G401 (cell line): ENCODE measurements at regions of chr1 and their contacts with region 1.

Region 1: GRCh38 chr1:153749408-153750005 is 21.7 kb downstream of the INTS3 start:
- DNase-seq: peak; percentile 71

Region 2: DNA sequence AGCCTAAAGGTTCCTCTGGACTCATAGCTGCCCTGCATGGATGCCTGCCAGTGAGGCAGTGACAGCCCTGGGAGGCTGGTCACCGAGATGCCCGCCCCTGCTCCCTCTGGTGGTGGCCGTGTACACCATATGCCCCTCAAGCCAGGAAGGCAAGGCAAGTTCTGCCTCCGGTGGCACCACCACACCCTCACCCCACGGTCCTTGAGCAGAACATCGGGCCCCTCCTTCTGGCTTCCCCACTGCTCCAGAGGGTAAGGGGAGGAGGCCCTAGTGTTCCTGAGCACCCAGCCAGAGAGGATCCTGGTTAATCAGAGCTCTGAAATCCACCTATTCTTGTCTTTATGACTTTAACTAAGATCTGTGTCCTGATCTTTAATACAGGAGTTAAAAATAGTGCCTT is 131.8 kb before region 1 on chr1:
- in situ Hi-C with region 1: no loop called
- DNase-seq: no peak

Region 3: DNA sequence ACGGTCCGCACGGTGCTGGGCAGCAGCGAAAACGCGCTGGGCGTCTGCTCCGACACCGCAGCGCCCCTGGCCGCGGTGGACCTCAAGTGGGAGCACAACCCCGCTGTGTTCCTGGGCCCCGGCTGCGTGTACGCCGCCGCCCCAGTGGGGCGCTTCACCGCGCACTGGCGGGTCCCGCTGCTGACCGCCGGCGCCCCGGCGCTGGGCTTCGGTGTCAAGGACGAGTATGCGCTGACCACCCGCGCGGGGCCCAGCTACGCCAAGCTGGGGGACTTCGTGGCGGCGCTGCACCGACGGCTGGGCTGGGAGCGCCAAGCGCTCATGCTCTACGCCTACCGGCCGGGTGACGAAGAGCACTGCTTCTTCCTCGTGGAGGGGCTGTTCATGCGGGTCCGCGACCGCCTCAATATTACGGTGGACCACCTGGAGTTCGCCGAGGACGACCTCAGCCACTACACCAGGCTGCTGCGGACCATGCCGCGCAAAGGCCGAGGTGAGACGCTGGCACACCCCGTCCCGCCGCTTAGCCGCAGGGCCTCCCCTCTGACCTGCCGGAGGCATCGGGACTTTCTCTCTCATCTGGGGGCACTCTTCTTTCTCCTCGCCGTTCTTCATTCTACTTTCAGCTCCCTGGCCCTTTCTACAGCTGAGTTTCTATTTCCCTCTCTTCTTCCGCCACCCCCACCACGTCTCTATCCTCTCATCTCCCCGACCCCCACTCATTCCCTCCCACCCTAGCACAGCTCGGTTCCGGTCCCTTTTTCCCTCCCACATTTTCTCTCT is 70.0 kb before region 1 on chr1:
- in situ Hi-C with region 1: loop called (anchors 10 kb)
- DNase-seq: no peak

Region 4: GRCh38 chr1:153929981-153930948 is 180.8 kb after region 1 on chr1:
- in situ Hi-C with region 1: no loop called
- DNase-seq: no peak